Activated B cell treated with CpG ODN at 0.5 μM for 24 hours (primary cell): ENCODE measurements at regions of chr1 and their contacts with region 1.

Region 1: GRCh38 chr1:55140546-55140983 is 74.6 kb downstream of the USP24 start:
- DNase-seq: no peak
- ATAC-seq: peak; percentile 90
- H3K4me3 Mint-ChIP-seq: no peak overlapping the region
- H3K27ac Mint-ChIP-seq: peak overlapping the region; percentile 51
- H3K4me1 Mint-ChIP-seq: peaks cover 7% of the 10 kb centered on the region
- H3K27me3 Mint-ChIP-seq: no peaks in the 10 kb centered on the region
- CTCF ChIP-seq: peak; percentile 41

Region 2: GRCh38 chr1:55150880-55151588 is 10.5 kb after region 1 on chr1:
- CTCF ChIA-PET with region 1: interaction called, 5 read pairs
- POLR2A ChIA-PET with region 1: no interaction called
- intact Hi-C with region 1: loop called (anchors 2 kb)
- DNase-seq: no peak
- ATAC-seq: peak; percentile 66
- H3K4me3 Mint-ChIP-seq: no peak overlapping the region
- H3K27ac Mint-ChIP-seq: peak overlapping the region; percentile 83
- H3K4me1 Mint-ChIP-seq: peaks cover 18% of the 10 kb centered on the region
- H3K27me3 Mint-ChIP-seq: no peaks in the 10 kb centered on the region
- CTCF ChIP-seq: no peak

Region 3: GRCh38 chr1:55215256-55216021 is 74.9 kb after region 1 on chr1 and contains the start of gene USP24:
- CTCF ChIA-PET with region 1: interaction called, 3 read pairs
- POLR2A ChIA-PET with region 1: no interaction called
- intact Hi-C with region 1: loop called (anchors 1 kb)
- DNase-seq: peak; percentile 79
- ATAC-seq: peak; percentile 76
- H3K4me3 Mint-ChIP-seq: peak within 1 kb of the TSS; percentile 92
- H3K27ac Mint-ChIP-seq: peak within 1 kb of the TSS; percentile 97
- H3K4me1 Mint-ChIP-seq: peaks cover 65% of the 10 kb centered on the region
- H3K27me3 Mint-ChIP-seq: no peaks in the 10 kb centered on the region
- CTCF ChIP-seq: no peak
- total RNA-seq, gene USP24: 91.4 and 93.2 TPM in 2 replicates

Region 4: GRCh38 chr1:55277377-55278130 is 137.0 kb after region 1 on chr1:
- CTCF ChIA-PET with region 1: interaction called, 92 read pairs
- POLR2A ChIA-PET with region 1: interaction called, 4 read pairs
- intact Hi-C with region 1: loop called (anchors 1 kb)
- DNase-seq: peak; percentile 71
- ATAC-seq: peak; percentile 90
- H3K4me3 Mint-ChIP-seq: peak overlapping the region; percentile 72
- H3K27ac Mint-ChIP-seq: peak overlapping the region; percentile 79
- H3K4me1 Mint-ChIP-seq: peaks cover 25% of the 10 kb centered on the region
- H3K27me3 Mint-ChIP-seq: no peaks in the 10 kb centered on the region
- CTCF ChIP-seq: no peak

Region 5: DNA sequence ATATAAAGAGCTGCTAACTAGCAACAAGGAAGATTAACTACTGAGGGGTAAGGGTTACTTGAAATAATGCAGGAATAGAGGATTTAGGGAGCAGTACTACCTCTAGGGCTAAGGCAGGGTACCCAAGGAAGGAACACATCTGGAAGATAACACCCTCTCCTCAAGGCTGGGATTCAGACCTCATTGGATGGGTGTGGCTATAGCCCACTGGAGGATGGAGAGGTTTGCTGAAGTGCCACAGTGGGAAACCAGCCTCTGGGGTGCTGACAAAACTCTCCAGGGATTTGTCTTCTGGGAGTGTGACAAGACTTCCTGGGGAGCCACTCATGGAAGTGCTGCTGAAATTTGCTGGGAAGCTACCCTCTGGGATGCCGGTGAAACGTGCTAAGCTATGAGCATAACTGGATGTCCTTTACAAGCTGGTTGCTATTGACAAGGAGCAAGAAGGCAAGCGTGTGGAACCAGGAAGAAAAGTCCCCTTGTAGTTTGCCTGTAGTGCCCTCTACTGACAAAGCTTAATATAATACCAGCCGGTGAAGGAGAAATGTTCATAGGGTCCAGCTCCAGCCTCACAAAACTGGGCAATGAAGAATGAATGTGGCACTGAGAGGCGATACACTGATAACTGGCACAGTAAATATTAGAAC is 197.4 kb after region 1 on chr1:
- CTCF ChIA-PET with region 1: interaction called, 10 read pairs
- POLR2A ChIA-PET with region 1: no interaction called
- intact Hi-C with region 1: loop called (anchors 1 kb)
- DNase-seq: no peak
- ATAC-seq: peak; percentile 66
- H3K4me3 Mint-ChIP-seq: no peak overlapping the region
- H3K27ac Mint-ChIP-seq: peak overlapping the region; percentile 12
- H3K4me1 Mint-ChIP-seq: peaks cover 9% of the 10 kb centered on the region
- H3K27me3 Mint-ChIP-seq: peaks cover 6% of the 10 kb centered on the region
- CTCF ChIP-seq: no peak

Region 6: DNA sequence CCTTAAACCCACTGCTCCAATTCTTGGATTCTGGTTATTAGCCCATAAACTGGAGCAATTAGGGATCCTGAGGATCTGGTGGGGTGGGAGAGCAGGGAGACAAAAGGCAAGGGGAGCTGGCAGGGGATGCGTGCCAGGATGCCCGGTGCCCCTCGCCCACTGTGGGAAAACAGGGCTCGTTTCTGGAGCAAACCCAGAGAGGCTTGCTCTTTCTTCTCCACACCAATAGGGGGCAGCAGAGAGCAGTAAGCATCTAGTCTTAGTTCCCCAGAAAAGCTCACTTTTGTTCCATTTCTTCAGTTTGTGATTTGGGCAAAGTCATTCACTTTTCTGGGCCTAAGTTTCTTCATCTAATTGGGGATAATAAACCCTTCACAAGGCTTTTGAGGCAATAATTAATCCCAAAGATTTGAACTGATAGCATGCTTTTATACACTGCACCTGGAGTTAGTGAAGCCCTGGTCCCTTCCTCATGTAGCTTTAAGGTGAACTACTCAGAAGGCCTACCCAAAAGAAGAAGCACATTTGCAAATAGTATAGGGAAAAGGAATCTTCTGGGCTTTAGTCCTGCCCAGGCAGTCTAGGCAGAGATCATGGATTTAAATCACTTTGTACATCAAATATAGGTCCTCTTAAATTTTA is 235.2 kb after region 1 on chr1:
- CTCF ChIA-PET with region 1: no interaction called
- POLR2A ChIA-PET with region 1: no interaction called
- intact Hi-C with region 1: loop called (anchors 1 kb)
- DNase-seq: no peak
- ATAC-seq: peak; percentile 49
- H3K4me3 Mint-ChIP-seq: no peak overlapping the region
- H3K27ac Mint-ChIP-seq: no peak overlapping the region
- H3K4me1 Mint-ChIP-seq: no peaks in the 10 kb centered on the region
- H3K27me3 Mint-ChIP-seq: peaks cover 1% of the 10 kb centered on the region
- CTCF ChIP-seq: peak; percentile 33

Region 7: DNA sequence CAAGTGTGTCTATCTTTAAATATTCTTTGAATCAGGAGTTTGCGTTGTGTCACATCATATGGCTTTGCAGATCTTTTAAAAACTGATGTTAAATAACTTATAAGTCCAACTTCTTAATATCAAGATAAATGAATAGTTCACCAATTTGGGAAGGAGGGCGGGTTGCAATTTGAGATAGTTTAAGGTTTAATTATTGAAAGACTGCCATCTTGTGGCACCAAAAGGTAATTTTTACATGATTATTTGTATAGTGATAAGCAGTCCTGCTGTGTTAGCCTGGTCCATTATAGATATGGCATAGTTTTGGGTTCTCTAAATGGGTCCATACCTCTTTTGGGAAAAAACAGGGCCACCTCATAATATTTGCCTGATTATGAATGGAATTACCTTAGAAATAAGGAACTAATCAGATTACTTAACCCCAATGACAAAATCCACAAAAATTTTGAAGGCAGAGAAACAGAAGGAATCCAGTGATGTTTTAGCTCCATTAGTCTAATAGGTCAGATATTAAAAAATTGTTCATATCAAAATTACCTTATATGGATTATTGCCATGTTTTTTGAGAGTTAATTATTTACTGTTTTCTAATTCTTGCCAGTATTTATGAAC is 1568.8 kb after region 1 on chr1:
- CTCF ChIA-PET with region 1: no interaction called
- POLR2A ChIA-PET with region 1: no interaction called
- intact Hi-C with region 1: loop called (anchors 5 kb)
- DNase-seq: no peak
- ATAC-seq: no peak
- H3K4me3 Mint-ChIP-seq: no peak overlapping the region
- H3K27ac Mint-ChIP-seq: no peak overlapping the region
- H3K4me1 Mint-ChIP-seq: no peaks in the 10 kb centered on the region
- H3K27me3 Mint-ChIP-seq: peaks cover 25% of the 10 kb centered on the region
- CTCF ChIP-seq: no peak